Activated CD4-positive, alpha-beta memory T cell treated with anti-CD3 and anti-CD28 coated beads for 36 hours (primary cell): ENCODE measurements at regions of chr11 and their contacts with region 1.

Region 1: DNA sequence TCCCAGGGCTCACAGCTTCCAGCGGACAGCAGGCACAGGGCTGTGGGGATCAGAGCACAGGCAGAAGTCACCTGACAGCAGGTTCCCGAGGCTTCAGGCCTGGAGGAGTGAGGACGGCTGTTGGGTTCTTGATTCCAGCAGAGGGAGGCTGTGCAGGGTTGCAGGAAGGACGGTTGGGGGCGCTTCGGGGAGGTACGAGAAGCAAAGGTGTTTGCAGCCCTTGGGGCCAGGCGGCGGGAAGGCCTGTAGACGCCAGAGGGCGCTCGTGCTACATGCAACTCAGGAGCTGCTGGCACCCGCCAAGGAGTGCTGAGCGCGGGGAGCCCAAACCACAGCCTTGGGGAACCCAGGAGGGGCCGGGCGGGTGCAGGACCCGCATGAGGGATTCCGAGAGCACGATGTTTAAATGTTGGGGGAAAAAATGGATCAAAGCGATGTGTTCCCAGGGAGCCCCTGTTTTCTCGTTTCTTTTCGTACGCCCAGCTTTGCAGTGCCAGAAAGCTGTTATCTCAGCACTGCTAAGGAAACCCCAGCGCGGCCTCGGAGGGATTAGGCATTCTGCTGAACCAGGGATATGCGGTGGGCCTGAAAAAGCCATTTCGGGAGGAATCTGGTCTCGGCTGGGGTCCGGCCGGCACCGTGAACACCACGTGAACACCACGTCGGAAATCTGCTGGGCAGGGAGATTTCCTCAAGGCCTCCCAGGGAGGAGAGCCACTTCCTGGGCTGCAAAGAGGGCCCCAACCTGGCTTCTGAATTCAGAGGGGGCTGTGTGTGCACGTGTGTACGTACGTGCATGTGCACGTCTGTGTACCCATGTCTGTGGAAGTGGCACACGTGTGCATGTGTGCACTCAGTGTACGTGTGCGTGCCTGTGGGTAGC is 88.1 kb downstream of the KCNQ1 start:
- DNase-seq: peak; percentile 94
- H3K4me3 Mint-ChIP-seq: peak overlapping the region; percentile 54
- H3K27ac Mint-ChIP-seq: no peak overlapping the region
- H3K4me1 Mint-ChIP-seq: peaks cover 10% of the 10 kb centered on the region
- H3K27me3 Mint-ChIP-seq: no peaks in the 10 kb centered on the region

Region 2: DNA sequence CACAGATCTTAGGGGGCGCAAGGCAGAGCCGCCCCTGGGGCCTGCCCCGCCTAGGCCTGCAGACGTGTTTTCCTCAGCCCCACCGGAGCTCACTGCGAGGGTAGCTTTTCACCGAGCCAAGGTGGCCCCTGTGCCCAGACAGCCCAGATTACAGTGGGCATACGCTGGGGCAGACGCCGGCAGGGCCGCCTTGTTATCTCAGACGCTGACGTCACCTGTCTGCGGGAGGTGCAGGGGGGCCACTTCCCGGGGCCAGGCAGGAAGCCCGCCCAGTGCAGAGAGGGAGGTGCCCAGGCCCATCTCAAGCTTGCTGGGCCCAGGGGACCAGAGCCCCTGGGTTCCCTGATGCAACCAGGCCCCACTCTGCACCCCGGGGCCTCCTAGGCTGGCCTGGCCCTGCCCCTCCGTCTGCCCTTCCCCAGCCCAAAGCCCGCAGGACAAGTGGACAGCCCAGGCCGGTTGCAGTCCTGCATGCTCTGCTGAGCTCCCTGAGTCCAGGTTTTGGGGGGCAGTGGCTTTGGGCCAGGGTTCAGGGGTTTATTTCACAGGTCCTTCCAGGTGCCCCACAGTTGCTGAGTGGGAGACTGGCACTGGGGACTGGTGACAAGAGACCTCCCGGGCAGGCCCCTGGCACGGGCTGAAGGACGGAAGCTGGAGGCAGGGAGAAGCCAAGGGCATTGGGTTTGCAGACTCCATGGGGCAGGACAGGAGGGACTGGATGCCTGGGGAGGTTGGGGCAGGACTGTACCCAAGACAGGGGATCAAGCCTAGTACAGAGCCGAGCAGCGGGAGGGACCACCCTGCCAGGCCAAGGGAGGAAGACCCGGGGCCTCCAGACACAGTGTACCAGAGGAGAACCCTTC is 432.4 kb before region 1 on chr11:
- CTCF ChIA-PET with region 1: no interaction called
- POLR2A ChIA-PET with region 1: no interaction called
- intact Hi-C with region 1: no loop called
- DNase-seq: no peak
- H3K4me3 Mint-ChIP-seq: no peak overlapping the region
- H3K27ac Mint-ChIP-seq: no peak overlapping the region
- H3K4me1 Mint-ChIP-seq: no peaks in the 10 kb centered on the region
- H3K27me3 Mint-ChIP-seq: peaks cover 3% of the 10 kb centered on the region

Region 3: DNA sequence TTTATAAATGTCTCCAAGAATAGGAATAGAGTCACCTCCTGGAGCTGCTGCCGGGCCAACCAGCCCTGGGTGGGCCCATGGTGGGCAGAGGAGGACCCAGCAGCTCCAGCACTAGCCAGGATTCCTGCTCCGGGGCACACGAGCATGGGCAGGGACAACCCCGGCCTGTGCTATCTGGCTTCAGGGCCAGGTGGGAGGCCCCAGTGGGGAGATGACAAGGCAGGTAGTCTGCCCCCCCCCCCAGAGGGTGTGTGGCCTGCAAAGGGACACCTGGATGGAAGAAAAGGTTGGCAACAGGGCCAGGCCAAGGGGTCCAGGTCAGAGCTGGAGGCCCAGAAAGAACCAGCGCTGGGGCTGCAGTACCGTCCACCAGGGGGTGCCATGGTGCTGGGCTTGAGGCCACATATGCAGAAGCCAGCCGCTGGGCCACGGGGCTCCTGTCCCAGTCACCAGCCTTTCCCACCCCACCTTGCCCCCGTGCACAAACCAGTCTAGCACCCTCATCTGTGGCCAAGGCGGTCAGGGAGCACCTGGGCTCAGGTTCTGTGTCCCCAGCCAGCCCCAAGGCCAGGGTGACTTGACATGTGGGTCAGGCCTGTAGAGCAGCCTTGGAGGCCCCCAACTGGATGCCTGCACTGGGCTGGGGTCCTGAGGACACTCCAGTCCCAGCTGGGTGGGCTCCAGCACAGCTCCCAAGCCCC is 227.7 kb before region 1 on chr11:
- CTCF ChIA-PET with region 1: interaction called, 26 read pairs
- POLR2A ChIA-PET with region 1: no interaction called
- intact Hi-C with region 1: loop called (anchors 5 kb)
- DNase-seq: peak; percentile 88
- H3K4me3 Mint-ChIP-seq: no peak overlapping the region
- H3K27ac Mint-ChIP-seq: no peak overlapping the region
- H3K4me1 Mint-ChIP-seq: peaks cover 42% of the 10 kb centered on the region
- H3K27me3 Mint-ChIP-seq: no peaks in the 10 kb centered on the region

Region 4: DNA sequence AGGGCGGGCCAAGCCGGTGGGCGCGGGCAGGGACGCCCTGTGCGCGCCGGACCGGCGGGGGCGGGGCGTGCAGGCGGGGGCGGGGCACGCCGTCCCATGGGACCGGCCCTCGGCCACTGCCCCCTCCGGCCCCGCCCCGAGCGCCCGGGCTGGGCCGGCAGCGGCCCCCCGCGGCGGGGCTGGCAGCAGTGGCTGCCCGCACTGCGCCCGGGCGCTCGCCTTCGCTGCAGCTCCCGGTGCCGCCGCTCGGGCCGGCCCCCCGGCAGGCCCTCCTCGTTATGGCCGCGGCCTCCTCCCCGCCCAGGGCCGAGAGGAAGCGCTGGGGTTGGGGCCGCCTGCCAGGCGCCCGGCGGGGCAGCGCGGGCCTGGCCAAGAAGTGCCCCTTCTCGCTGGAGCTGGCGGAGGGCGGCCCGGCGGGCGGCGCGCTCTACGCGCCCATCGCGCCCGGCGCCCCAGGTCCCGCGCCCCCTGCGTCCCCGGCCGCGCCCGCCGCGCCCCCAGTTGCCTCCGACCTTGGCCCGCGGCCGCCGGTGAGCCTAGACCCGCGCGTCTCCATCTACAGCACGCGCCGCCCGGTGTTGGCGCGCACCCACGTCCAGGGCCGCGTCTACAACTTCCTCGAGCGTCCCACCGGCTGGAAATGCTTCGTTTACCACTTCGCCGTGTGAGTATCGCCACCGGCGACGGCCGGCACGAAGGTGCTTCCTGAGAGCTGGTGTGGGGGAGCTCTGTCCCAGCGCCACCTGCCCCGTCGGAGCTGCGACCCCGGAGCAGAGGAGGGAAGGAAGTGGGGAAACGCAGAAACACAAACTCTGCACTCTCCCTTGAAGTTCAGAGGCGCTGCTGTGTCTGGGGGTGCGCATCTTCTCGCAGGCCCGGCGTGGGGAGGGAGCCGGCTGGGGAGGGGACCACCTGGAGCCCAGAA is 87.9 kb before region 1 on chr11 and contains the start of gene KCNQ1:
- CTCF ChIA-PET with region 1: interaction called, 7 read pairs
- POLR2A ChIA-PET with region 1: no interaction called
- intact Hi-C with region 1: loop called (anchors 5 kb)
- DNase-seq: peak; percentile 52
- H3K4me3 Mint-ChIP-seq: peak within 1 kb of the TSS; percentile 89
- H3K27ac Mint-ChIP-seq: peak within 1 kb of the TSS; percentile 4
- H3K4me1 Mint-ChIP-seq: peaks cover 33% of the 10 kb centered on the region
- H3K27me3 Mint-ChIP-seq: no peaks in the 10 kb centered on the region
- total RNA-seq, gene KCNQ1: 10.7 to 10.8 TPM

Region 5: DNA sequence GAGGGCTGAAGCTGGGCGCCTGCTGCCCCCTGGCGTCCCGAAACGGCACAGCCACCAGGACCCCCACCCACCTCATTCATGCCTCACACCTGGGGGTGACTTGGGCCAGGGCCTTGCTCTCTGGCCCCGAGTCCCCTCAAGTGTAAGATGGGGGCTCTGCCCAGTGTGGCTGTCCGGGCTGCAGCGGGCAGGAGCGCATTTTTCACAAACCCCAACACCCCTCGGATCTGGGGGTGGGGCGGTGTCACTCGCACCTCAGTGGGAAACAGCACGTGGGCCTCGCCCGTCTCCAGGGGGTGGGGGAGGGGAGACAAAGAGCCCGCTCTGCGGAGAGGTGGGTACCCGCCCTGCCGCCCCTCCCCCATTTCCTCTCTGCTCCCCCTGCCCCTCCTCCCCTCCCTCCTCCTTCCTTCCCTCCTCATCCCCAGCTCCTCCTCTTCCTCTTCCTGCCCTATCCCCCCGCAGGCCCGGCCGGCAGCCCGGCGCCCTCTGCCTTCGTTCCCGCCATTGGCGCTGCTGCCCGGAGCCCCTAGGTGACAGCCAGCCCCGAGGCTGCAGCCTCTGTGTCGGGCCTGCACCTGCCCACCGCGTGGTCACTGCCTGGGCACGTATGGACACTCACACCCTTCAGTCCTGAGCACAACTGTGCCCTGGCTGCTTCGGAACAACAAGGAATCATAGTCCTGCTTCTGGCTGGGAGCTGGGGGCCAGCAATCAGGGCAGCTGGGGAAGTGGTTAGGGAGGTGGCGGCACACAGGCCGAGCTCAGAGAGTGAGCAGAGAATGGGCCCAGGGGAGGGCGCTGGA is 359.5 kb after region 1 on chr11:
- CTCF ChIA-PET with region 1: interaction called, 532 read pairs
- POLR2A ChIA-PET with region 1: interaction called, 9 read pairs
- intact Hi-C with region 1: loop called (anchors 1 kb)
- DNase-seq: peak; percentile 80
- H3K4me3 Mint-ChIP-seq: peak overlapping the region; percentile 80
- H3K27ac Mint-ChIP-seq: peak overlapping the region; percentile 84
- H3K4me1 Mint-ChIP-seq: peaks cover 10% of the 10 kb centered on the region
- H3K27me3 Mint-ChIP-seq: no peaks in the 10 kb centered on the region

Region 6: DNA sequence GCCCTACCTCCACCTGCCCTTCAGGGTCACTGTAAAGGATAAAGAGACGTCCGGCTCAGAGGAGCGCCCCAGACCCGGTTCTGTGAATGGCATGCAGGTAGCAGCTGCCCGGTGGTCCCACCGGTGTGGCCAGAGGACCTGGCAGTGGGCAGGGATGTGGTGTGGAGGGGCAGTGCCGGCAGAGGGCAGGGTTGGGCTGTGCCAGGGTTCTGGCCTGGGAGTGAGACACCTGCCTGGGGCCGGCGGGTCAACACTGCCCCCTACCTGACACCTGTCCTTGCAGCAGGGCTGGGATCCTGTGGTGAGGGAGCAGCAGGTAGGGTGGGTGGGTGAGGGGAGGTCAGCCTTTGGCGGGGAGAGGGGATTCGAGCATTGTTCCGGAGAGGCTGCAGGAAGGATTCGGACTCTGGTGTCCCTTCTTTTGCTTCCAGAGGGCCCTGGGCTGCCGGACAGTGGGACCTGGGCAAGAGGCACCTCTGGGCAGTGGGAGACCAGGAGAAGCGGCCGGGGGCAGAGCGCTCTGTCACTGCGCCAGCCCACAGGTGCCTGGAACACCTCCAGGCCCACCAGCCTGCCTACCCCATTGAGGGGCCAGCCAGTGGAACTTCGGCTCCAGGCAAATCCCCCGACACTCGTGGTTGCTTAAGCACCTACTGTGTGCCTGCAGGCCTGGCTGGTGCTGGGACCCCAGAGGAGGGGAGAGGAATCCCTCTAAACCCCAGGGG is 397.9 kb after region 1 on chr11:
- CTCF ChIA-PET with region 1: interaction called, 53 read pairs
- POLR2A ChIA-PET with region 1: no interaction called
- intact Hi-C with region 1: loop called (anchors 1 kb)
- DNase-seq: peak; percentile 80
- H3K4me3 Mint-ChIP-seq: peak overlapping the region; percentile 64
- H3K27ac Mint-ChIP-seq: peak overlapping the region; percentile 25
- H3K4me1 Mint-ChIP-seq: peaks cover 33% of the 10 kb centered on the region
- H3K27me3 Mint-ChIP-seq: peaks cover 11% of the 10 kb centered on the region